Activated B cell treated with CpG ODN at 0.5 μM for 24 hours (primary cell): ENCODE measurements at regions of chr9 and their contacts with region 1.

Region 1: DNA sequence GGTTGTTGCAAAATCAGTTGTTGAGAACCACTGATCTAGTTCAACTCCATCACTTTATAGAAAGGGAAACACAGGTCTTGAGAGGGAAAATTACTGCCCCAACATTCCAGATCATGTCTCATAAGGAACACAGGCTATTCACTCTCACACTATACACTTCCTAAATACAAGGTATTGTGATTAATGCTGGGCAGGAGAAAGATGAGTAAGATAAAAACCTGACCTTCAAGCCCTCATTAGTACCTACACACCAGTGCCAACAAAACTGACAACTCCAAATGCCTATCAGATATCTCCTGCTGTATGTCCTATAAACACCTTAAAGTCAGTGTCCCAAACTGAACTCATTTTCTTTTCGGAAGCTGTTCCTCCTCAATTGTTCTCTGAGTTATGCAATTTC is 8.2 kb downstream of the GNE start:
- DNase-seq: no peak
- ATAC-seq: no peak
- H3K4me3 Mint-ChIP-seq: no peak overlapping the region
- H3K27ac Mint-ChIP-seq: peak overlapping the region; percentile 27
- H3K4me1 Mint-ChIP-seq: peaks cover 28% of the 10 kb centered on the region
- H3K27me3 Mint-ChIP-seq: no peaks in the 10 kb centered on the region
- CTCF ChIP-seq: no peak

Region 2: DNA sequence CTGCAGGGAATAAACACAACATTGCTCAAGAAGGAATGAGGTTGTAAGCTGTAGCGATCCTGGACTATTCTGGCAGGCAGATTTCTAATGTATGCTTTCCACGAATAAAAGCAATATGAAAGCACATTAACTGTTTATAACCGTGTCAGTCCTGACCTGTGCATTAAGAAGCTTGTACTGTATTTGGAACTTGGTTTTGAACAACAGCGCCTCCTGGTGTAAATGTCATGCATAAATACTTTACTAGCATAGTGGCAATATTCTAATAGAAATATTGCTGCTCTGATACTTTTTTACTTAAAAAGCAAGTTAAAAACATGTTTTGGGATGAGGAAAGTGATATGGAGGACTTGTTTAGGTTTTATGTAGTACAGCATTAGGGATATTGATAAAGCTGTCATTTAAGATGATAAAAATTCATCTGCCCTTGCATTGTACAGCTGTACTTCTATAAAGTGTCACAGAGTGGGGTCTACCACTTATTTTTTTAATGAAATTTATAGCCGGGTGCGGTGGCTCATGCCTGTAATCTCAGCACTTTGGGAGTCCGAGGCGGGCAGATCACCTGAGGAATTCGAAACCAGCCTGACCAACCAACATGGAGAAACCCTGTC is 78.8 kb after region 1 on chr9:
- CTCF ChIA-PET with region 1: interaction called, 51 read pairs
- POLR2A ChIA-PET with region 1: no interaction called
- intact Hi-C with region 1: loop called (anchors 1 kb)
- DNase-seq: no peak
- ATAC-seq: peak; percentile 77
- H3K4me3 Mint-ChIP-seq: no peak overlapping the region
- H3K27ac Mint-ChIP-seq: no peak overlapping the region
- H3K4me1 Mint-ChIP-seq: peaks cover 2% of the 10 kb centered on the region
- H3K27me3 Mint-ChIP-seq: no peaks in the 10 kb centered on the region
- CTCF ChIP-seq: peak; percentile 65

Region 3: DNA sequence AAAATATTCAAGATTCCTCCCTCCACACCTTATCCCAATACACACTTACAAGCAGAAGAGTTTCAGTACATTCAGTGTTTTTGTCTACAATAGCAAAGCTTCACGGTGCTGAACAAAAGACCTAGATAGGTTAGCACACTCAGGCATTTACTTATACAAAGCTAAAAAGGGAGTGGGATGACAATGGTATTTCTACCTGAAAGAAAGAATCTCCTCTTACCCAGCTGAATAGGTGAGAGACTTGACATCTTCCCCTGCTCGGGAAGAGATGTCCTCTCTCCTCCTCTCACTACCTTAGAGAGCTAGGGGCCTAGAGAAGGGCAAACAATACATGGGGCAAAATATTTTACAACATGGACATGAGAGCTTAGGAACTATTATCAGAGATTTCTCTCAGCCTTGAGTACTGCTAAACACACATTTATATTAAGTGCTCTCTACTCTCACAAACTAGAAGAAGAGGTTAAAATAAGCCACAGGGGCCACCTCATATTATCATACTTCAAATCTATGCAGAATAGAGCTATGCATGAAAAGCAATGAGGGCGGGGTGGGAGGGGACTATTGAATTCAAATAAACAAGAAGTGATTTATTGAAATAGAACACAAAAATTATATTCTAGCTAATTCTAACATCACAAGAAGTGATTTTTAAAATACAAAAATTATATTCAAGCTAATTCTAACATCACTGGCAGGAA is 188.6 kb after region 1 on chr9:
- CTCF ChIA-PET with region 1: no interaction called
- POLR2A ChIA-PET with region 1: interaction called, 16 read pairs
- intact Hi-C with region 1: no loop called
- DNase-seq: no peak
- ATAC-seq: no peak
- H3K4me3 Mint-ChIP-seq: no peak overlapping the region
- H3K27ac Mint-ChIP-seq: no peak overlapping the region
- H3K4me1 Mint-ChIP-seq: peaks cover 11% of the 10 kb centered on the region
- H3K27me3 Mint-ChIP-seq: no peaks in the 10 kb centered on the region
- CTCF ChIP-seq: no peak

Region 4: GRCh38 chr9:36855448-36856315 is 605.6 kb after region 1 on chr9:
- CTCF ChIA-PET with region 1: no interaction called
- POLR2A ChIA-PET with region 1: no interaction called
- intact Hi-C with region 1: no loop called
- DNase-seq: no peak
- ATAC-seq: peak; percentile 61
- H3K4me3 Mint-ChIP-seq: no peak overlapping the region
- H3K27ac Mint-ChIP-seq: peak overlapping the region; percentile 79
- H3K4me1 Mint-ChIP-seq: peaks cover 47% of the 10 kb centered on the region
- H3K27me3 Mint-ChIP-seq: no peaks in the 10 kb centered on the region
- CTCF ChIP-seq: no peak